MCF 10A (cell line): ENCODE measurements at regions of chr2 and their contacts with region 1.

Region 1: GRCh38 chr2:239465017-239466001 is 64.5 kb upstream of the HDAC4 start:
- DNase-seq: peak; percentile 95
- H3K4me3 Mint-ChIP-seq: peak overlapping the region; percentile 20
- H3K27ac Mint-ChIP-seq: peak overlapping the region; percentile 43
- H3K4me1 Mint-ChIP-seq: peaks cover 6% of the 10 kb centered on the region
- H3K27me3 Mint-ChIP-seq: no peaks in the 10 kb centered on the region
- CTCF ChIP-seq: no peak

Region 2: GRCh38 chr2:239444626-239445625 is 20.4 kb before region 1 on chr2:
- CTCF ChIA-PET with region 1: no interaction called
- POLR2A ChIA-PET with region 1: interaction called, 4 read pairs
- intact Hi-C with region 1: loop called (anchors 1 kb)
- DNase-seq: peak; percentile 97
- H3K4me3 Mint-ChIP-seq: peak overlapping the region; percentile 60
- H3K27ac Mint-ChIP-seq: peak overlapping the region; percentile 73
- H3K4me1 Mint-ChIP-seq: peaks cover 26% of the 10 kb centered on the region
- H3K27me3 Mint-ChIP-seq: peaks cover 10% of the 10 kb centered on the region
- CTCF ChIP-seq: no peak